Naive thymus-derived CD4-positive, alpha-beta T cell (primary cell): ENCODE measurements at regions of chr3 and their contacts with region 1.

Region 1: DNA sequence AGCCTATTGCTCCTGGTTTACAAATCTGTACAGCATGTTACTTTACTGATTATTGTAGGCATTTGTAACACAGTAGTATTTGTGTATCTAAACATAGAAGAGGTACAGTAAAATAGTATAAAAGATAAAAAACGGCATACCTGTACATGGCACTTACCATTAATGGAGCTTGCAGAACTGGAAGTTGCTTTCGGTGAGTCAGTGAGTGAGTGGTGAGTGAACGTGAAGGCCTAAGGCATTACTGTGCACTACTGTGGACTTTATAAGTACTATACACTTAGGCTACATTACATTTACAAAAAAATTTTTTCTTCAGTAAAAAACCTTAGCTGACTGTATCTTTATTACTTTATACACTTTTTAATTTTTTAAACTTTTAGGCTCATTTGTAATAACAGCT is 90.9 kb downstream of the RAP2B start:
- DNase-seq: no peak
- ATAC-seq: no peak
- H3K4me3 ChIP-seq: no peak overlapping the region
- H3K4me3 Mint-ChIP-seq: no peak overlapping the region
- H3K27ac ChIP-seq: no peak overlapping the region
- H3K27ac Mint-ChIP-seq: peak overlapping the region in 1 of 9 donors; percentile 17
- H3K4me1 ChIP-seq: peaks cover 0 to 7% of the 10 kb centered on the region in 2 donors
- H3K4me1 Mint-ChIP-seq: peaks cover 7 to 62% (median 48%) of the 10 kb centered on the region in 7 donors
- H3K27me3 ChIP-seq: no peaks in the 10 kb centered on the region
- H3K27me3 Mint-ChIP-seq: no peaks in the 10 kb centered on the region

Region 2: DNA sequence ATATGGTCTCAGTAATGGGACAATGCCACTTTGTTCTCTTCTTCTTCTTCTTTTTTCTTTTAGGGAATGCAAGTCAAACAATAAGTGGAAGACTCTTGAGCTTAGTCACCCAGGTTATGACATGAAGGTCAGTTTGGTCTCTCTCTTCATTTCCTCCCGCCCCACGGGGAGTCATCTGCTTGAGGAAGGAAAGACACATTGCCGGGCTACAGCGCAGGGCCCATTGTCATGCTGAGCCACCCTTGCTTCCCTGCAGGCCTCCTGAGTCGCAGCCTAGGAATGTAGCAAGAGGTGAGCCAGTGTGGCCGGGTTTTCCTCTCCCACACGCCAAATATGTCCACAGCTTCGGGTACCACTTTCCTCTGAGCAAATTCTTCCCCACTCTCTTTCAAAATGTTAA is 43.4 kb before region 1 on chr3:
- CTCF ChIA-PET with region 1: interaction called, 3 read pairs
- POLR2A ChIA-PET with region 1: no interaction called
- intact Hi-C with region 1: loop called in 1 of 2 experiments (anchors 5 kb)
- DNase-seq: no peak
- ATAC-seq: peak; percentile 85
- H3K4me3 ChIP-seq: no peak overlapping the region
- H3K4me3 Mint-ChIP-seq: peak overlapping the region in 9 of 10 donors; percentile 20 to 80 (median 72)
- H3K27ac ChIP-seq: no peak overlapping the region
- H3K27ac Mint-ChIP-seq: peak overlapping the region in 7 of 9 donors; percentile 0 to 87 (median 71)
- H3K4me1 ChIP-seq: peaks cover 6 to 14% of the 10 kb centered on the region in 2 donors
- H3K4me1 Mint-ChIP-seq: peaks cover 15 to 60% (median 45%) of the 10 kb centered on the region in 7 donors
- H3K27me3 ChIP-seq: no peaks in the 10 kb centered on the region
- H3K27me3 Mint-ChIP-seq: peaks cover 0 to 1% (median 0%) of the 10 kb centered on the region in 5 donors

Region 3: DNA sequence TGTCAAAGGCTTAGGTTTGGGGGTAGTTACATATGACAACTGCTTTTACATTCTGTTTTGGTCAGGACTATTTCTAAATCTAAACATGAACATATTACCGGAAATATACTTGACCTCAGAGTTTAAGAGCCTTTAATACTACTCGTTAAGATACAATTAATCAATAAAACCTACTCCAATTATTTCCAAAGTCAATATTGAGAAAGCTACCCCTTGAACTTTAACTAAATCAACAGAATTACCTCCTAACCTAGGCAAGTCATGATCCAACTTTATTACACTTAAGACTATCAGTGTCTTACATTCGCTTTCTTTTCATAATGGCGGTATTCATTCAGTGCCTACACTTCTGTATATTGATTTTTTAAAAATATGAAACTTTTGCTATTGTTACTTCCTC is 16.8 kb after region 1 on chr3:
- CTCF ChIA-PET with region 1: no interaction called
- POLR2A ChIA-PET with region 1: interaction called, 3 read pairs
- intact Hi-C with region 1: loop called in 1 of 2 experiments (anchors 2 kb)
- DNase-seq: no peak
- ATAC-seq: no peak
- H3K4me3 ChIP-seq: no peak overlapping the region
- H3K4me3 Mint-ChIP-seq: no peak overlapping the region
- H3K27ac ChIP-seq: no peak overlapping the region
- H3K27ac Mint-ChIP-seq: no peak overlapping the region
- H3K4me1 ChIP-seq: no peaks in the 10 kb centered on the region
- H3K4me1 Mint-ChIP-seq: peaks cover 0 to 37% (median 26%) of the 10 kb centered on the region in 7 donors
- H3K27me3 ChIP-seq: no peaks in the 10 kb centered on the region
- H3K27me3 Mint-ChIP-seq: no peaks in the 10 kb centered on the region